ENCODE measurements at regions of chr5 and their contacts with region 1.

Region 1: DNA sequence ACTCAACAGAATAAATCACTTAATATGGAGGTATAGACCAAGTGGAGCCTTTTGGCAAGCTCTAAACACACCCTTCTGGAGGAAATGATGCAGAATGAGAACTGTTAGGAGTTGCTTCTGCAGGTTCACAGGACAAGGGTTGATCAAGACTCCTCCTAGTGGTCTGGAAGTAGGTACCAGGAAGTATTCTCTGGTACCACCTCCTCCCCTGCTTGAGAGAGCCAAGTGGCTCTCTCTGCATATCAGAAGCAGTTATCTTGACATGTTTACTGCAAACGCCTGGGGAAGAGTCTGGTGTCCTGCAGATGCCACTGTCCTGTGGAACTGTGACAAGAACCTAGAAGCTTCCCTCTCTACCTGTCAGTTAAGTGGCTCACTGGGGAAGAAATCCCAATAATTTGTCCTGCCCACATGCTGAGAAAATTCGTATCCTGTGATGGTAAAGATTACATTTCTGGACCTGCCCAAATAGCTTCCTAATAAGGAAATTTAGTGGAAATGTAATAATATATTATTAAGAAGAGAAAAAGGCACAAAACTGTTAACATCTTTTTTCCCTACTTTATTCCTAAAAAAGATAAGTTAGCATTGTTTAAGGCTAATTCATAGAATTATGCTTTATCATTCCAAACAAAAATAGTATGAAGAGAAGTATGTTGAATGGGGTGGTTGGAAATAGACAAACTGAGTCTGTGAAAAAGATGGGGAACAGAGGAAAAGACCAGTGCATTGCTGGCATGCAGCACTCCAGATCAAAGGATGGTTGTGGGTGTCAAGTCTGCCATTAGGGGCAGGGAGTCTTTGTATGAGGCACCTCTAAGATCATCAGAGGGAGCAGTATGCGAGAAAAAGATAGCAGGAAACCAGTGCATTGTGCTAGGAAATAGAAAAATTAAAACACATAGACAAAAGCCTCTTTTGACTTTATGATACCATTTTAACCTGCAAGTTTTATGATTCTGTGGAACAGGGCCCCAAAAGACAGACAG is 118.8 kb downstream of the CDC42SE2 start:
- H3K4me3 ChIP-seq: no peak overlapping the region
- H3K27ac ChIP-seq: no peak overlapping the region
- H3K4me1 ChIP-seq: peaks cover 12% of the 10 kb centered on the region
- CTCF ChIP-seq: peak; percentile 63; the same call in 1 of the 2 replicates

Region 2: DNA sequence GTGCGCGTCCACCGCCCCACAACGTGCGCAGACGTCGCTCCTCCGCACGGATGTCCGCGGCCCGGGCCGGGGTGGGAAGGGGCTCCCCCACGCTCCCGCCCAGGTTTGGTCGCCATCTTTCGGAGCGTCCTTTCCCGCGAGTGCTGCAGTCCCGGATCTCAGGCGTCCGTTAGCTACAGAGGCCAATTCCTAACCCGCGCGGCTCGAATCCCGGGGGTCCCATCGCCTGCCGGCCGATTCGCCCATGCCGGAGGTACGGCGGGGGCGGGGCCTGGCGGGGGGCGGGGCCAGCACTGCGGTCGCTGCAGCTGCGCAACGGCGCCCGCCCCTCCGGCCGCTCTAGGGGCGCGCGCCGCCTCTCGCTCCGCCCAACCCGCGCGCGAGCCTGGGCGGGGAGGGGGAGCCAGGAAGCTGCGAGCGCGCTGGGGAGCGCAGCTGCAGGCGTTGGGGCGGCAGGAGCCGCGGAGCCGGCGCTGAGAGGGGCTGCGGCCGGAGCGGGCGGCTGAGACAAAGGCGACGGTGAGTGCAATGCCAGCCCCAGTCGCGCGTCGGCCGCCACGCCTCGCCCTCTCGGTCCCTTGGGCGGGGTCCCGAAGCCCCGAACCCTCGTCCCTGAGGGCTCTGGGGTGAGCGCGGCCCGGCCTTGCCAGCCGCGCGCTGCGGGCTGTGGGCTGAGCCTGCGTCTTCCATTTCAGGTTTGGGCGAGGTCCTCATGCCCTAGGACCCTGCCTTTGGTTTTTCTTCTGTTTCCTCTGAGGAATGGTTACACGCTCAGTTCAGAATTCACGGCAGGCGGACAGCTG is 118.9 kb before region 1 on chr5 and contains the start of gene CDC42SE2:
- CTCF ChIA-PET with region 1: interaction called, 18 read pairs
- POLR2A ChIA-PET with region 1: interaction called, 3 read pairs
- H3K4me3 ChIP-seq: peak within 1 kb of the TSS; percentile 98
- H3K27ac ChIP-seq: peak within 1 kb of the TSS; percentile 90
- H3K4me1 ChIP-seq: no peaks in the 10 kb centered on the region; the same call in 1 of the 2 replicates
- CTCF ChIP-seq: peak; percentile 51; the same call in 1 of the 2 replicates

Region 3: DNA sequence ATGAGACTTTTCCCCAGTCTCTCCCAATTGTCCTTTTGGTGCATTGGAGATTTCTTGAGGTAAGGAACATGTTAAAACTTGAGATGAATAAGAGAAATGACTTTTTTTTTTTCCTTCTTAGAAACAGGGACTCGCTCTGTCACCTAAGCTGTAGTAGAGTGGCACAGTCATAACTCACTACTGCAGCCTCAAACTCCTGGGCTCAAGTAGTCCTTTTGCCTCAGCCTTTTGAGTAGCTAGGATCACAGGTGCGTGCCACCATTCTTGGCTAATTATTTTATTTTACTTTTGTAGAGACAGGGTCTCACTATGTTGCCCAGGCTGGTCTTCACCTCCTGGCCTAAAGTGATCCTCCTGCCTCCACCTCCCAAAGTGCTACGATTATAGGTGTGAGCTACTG is 93.0 kb before region 1 on chr5:
- CTCF ChIA-PET with region 1: interaction called, 12 read pairs
- POLR2A ChIA-PET with region 1: no interaction called
- H3K4me3 ChIP-seq: no peak overlapping the region
- H3K27ac ChIP-seq: no peak overlapping the region
- H3K4me1 ChIP-seq: no peaks in the 10 kb centered on the region
- CTCF ChIP-seq: no peak

Measured in HEK293 (cell line).